Heart left ventricle (tissue), 16 donors: ENCODE measurements at regions of chr4 and their contacts with region 1.

Region 1: GRCh38 chr4:108762559-108763225 is at the start of gene ETNPPL:
- DNase-seq: peak; percentile 11 to 68 (median 49)
- ATAC-seq: peak; percentile 63 to 90 (median 82)
- H3K4me3 ChIP-seq: peak within 1 kb of the TSS; percentile 27 to 68 (median 59)
- H3K27ac ChIP-seq: peak within 1 kb of the TSS in 5 of 12 donors; percentile 1 to 48 (median 32)
- H3K4me1 ChIP-seq: peaks cover 0 to 18% (median 4%) of the 10 kb centered on the region in 12 donors
- H3K27me3 ChIP-seq: peaks cover 0 to 41% (median 9%) of the 10 kb centered on the region in 9 donors
- CTCF ChIP-seq: peak in 1 of 12 donors; percentile 21
- POLR2A ChIP-seq: no peak
- total RNA-seq, gene ETNPPL: 2.2 to 11.5 (median 8.0) TPM

Region 2: DNA sequence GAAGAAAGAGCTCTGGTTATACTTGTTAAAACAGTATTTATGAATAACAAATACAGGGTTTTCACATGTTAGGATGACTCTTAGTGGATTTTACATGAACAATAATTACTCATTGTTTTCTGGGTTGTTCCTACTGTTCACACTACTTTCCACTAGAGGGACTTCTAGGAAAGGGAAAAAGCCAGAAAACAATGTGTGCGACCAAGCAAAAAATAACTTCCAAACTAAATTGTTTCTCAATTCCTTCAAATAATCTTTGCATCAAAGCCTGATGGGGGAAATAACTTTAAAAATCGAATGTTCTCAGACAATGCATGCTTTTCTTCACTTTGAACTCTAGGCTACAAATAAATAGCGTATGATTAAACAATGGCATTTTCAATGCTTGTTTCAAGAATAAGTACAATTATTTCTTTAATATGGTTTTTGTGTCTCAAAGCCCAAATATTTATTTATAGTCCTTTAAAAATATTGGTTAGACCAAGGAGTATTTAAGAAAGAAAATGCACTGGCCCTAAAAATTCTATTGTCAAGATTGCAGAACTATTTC is 72.2 kb after region 1 on chr4:
- intact Hi-C with region 1: loop called in 1 of 10 experiments (anchors 5 kb)
- DNase-seq: no peak
- ATAC-seq: no peak
- H3K4me3 ChIP-seq: no peak overlapping the region
- H3K27ac ChIP-seq: no peak overlapping the region
- H3K4me1 ChIP-seq: peaks cover 0 to 19% (median 0%) of the 10 kb centered on the region in 12 donors
- H3K27me3 ChIP-seq: no peaks in the 10 kb centered on the region
- CTCF ChIP-seq: peak; percentile 45 to 78 (median 70)
- POLR2A ChIP-seq: no peak

Region 3: GRCh38 chr4:108988464-108989195 is 225.9 kb after region 1 on chr4:
- intact Hi-C with region 1: no loop called
- DNase-seq: no peak
- ATAC-seq: no peak
- H3K4me3 ChIP-seq: no peak overlapping the region
- H3K27ac ChIP-seq: no peak overlapping the region
- H3K4me1 ChIP-seq: no peaks in the 10 kb centered on the region
- H3K27me3 ChIP-seq: no peaks in the 10 kb centered on the region
- CTCF ChIP-seq: no peak
- POLR2A ChIP-seq: no peak